ENCODE measurements at regions of chr11 and their contacts with region 1.

Region 1: DNA sequence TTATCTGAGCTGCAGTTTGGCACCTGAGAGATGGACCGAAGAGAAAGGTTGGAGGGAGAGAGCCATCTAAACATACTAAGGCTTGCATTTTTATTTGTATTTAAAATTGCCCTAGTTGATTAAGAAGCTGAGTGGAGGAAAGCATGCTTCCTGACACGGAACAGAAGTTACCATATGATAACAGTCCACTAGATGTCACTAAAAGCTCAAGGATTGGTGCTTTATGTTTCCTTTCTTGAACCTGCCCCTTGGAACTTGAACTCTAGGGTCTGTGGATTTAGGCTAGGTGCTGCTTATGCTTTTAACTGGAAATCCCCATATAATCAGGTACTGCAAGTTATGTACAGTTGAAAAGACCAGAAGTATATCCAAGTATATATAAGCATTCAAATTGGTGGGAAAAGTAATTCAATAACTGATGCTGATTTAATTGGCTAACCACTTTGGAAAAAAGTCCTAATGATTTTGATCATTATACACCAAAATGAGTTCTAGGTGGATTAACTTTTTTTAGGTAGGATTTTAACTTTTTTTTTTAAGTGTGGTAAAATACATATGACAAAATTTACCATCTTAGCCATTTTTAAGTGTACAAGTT is 9.5 kb downstream of the RBMXL2 start:
- DNase-seq: no peak
- ATAC-seq: peak; percentile 68

Region 2: DNA sequence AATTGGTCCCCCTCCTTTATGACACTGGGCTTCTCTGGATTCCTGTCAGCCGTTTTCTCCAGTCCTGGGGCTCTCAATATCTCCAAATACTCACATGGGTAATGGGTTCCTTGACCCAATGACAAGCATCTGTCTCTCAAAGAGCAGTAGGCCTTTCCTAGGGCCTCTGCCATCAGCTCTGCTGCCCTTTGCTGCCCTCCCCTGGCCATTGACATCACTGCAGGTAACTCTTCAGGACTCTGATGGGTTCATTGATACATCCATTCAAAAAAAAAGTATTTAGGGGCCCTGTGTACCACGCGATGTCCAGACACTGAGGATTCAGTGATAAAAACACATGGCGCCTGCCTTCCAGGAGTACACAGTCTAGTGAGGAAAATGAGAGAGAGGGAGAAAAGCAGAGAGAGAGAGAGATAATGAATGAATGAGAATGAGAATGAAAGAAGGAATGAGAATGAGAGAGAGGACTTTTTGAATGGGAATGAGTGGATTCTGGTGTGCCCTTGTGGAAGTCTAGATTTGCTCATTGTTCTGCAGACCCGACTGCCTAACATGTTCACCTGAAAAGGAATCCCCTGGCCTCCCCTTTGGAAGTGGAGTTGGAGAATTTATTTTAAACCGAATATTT is 344.4 kb after region 1 on chr11:
- intact Hi-C with region 1: loop called (anchors 10 kb)
- DNase-seq: peak; percentile 84
- ATAC-seq: peak; percentile 65